Activated CD8-positive, alpha-beta T cell treated with anti-CD3 and anti-CD28 coated beads, Interleukin-2, amount 10 ng/mL, durations not matched to agents 7 days and 5 days (primary cell): ENCODE measurements at regions of chr15 and their contacts with region 1.

Region 1: DNA sequence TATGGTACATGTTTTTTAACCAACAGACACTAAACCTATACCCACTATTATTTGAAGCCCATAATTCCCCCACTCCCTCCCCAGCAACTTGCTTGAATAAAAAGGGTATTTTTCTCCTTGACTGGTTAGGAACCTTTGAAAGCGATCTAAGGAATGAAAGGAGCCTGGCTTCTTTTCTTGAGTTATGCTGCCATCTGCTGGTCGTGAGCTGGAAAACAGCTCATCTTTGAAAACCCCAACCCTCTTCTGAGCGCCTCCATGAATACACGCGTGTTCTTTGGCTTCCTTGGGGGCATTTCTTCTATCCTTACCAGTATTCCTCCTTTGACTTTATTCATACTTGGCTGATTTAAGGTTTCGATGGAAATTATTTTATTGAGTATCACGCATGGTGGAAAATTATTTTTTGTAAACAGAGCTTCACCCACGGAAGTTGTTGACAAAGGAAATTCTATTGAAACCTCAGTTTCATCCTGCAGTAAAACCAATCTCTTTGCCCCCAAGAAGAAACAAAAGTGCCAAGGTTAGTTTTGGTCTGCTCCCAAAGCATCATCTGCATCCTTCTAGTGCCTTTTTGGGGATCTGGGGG is 171.6 kb downstream of the SV2B start:
- DNase-seq: peak; percentile 74
- ATAC-seq: no peak
- H3K4me3 Mint-ChIP-seq: peak overlapping the region; percentile 49
- H3K27ac Mint-ChIP-seq: no peak overlapping the region
- H3K4me1 Mint-ChIP-seq: peaks cover 11% of the 10 kb centered on the region
- H3K27me3 Mint-ChIP-seq: peaks cover 31% of the 10 kb centered on the region

Region 2: DNA sequence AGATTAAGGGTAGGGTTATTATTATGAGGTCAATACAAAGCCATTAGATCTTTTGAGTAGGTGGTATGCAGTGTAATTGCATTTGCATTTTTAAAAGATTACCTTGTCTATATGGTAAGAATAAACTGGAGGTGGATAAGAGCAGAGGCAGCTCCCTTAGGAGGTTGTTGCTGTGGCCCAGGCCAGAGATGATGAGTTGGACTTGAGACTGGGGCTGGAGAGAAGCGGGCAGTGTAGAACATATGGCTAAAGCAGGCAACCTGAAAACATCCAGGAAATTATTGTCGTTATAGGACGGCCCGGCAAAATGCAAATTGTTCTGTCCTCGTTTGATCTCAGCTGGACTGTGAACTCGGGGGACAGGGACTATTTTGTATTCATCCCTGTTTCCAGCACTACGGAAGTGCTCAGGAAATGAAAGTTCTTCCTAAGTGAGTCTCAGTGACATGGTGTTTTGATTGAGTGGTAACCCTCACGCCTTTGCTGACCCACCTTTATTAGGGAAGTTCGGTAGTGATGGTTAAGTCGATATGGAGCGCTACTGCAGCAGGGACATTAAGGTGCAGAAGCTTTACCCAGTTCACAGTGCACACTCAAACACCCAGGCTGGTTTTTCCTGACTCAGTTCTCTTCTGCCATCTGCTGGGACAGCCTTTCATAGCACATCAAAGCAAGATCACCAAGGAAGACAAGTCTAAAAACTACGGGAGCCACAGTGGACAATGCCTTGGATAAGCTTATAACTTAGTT is 222.1 kb before region 1 on chr15:
- CTCF ChIA-PET with region 1: interaction called, 108 read pairs
- POLR2A ChIA-PET with region 1: no interaction called
- DNase-seq: peak; percentile 79
- ATAC-seq: peak; percentile 90
- H3K4me3 Mint-ChIP-seq: no peak overlapping the region
- H3K27ac Mint-ChIP-seq: no peak overlapping the region
- H3K4me1 Mint-ChIP-seq: peaks cover 27% of the 10 kb centered on the region
- H3K27me3 Mint-ChIP-seq: peaks cover 35% of the 10 kb centered on the region

Region 3: GRCh38 chr15:91055548-91056331 is 215.9 kb before region 1 on chr15:
- CTCF ChIA-PET with region 1: interaction called, 108 read pairs
- POLR2A ChIA-PET with region 1: no interaction called
- DNase-seq: peak; percentile 51
- ATAC-seq: peak; percentile 61
- H3K4me3 Mint-ChIP-seq: no peak overlapping the region
- H3K27ac Mint-ChIP-seq: no peak overlapping the region
- H3K4me1 Mint-ChIP-seq: no peaks in the 10 kb centered on the region
- H3K27me3 Mint-ChIP-seq: peaks cover 60% of the 10 kb centered on the region

Region 4: DNA sequence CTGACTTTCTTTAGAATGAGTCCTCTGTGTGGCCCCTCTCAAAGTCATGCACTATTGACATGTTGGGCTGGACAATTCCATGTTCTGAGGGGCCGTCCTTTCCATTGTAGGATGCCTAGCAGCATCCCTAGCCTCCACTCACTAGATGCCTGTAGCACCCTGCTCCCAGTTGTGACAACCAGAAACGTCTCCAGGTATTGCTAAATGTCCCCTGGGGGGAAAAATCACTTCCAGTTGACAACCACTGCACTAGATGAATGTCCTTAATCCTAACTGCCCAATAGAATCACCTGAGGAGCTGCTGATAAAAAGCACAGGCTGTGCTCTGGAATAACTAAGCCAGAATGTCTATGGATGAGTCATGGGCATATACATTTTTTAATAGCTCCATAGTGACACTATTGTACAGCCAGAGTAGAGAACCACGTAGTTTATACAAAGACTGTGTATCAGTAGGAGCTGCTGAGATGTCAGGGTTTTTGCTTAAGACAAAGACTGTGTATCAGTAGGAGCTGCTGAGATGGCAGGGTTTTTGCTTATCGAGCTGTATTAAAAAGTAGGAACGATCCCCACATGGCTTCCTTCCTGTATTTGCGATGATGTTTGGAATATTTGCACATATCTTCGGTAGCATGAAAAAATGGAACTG is 34.3 kb before region 1 on chr15:
- CTCF ChIA-PET with region 1: interaction called, 10 read pairs
- POLR2A ChIA-PET with region 1: no interaction called
- DNase-seq: no peak
- ATAC-seq: no peak
- H3K4me3 Mint-ChIP-seq: no peak overlapping the region
- H3K27ac Mint-ChIP-seq: no peak overlapping the region
- H3K4me1 Mint-ChIP-seq: no peaks in the 10 kb centered on the region
- H3K27me3 Mint-ChIP-seq: peaks cover 31% of the 10 kb centered on the region

Region 5: DNA sequence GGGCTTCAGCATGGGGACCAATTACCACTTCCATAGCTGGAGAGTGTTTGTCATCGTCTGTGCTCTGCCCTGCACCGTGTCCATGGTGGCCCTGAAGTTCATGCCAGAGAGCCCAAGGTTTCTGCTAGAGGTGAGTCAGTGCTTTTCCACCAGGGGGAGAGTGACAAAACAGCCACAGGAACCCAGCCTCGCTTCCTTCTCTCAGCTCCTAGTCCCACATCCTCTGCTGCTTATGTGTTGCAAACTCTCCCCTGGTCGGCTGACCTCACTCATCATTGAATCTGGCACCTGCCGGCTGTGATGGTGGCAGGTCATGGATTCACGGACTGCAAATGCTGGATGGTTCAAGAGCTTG is 13.3 kb before region 1 on chr15:
- CTCF ChIA-PET with region 1: interaction called, 45 read pairs
- POLR2A ChIA-PET with region 1: no interaction called
- DNase-seq: peak; percentile 42
- ATAC-seq: peak; percentile 61
- H3K4me3 Mint-ChIP-seq: no peak overlapping the region
- H3K27ac Mint-ChIP-seq: no peak overlapping the region
- H3K4me1 Mint-ChIP-seq: peaks cover 10% of the 10 kb centered on the region
- H3K27me3 Mint-ChIP-seq: peaks cover 15% of the 10 kb centered on the region

Region 6: GRCh38 chr15:91282486-91282885 is 10.8 kb after region 1 on chr15:
- CTCF ChIA-PET with region 1: interaction called, 14 read pairs
- POLR2A ChIA-PET with region 1: no interaction called
- DNase-seq: no peak
- ATAC-seq: no peak
- H3K4me3 Mint-ChIP-seq: no peak overlapping the region
- H3K27ac Mint-ChIP-seq: no peak overlapping the region
- H3K4me1 Mint-ChIP-seq: no peaks in the 10 kb centered on the region
- H3K27me3 Mint-ChIP-seq: peaks cover 20% of the 10 kb centered on the region

Region 7: DNA sequence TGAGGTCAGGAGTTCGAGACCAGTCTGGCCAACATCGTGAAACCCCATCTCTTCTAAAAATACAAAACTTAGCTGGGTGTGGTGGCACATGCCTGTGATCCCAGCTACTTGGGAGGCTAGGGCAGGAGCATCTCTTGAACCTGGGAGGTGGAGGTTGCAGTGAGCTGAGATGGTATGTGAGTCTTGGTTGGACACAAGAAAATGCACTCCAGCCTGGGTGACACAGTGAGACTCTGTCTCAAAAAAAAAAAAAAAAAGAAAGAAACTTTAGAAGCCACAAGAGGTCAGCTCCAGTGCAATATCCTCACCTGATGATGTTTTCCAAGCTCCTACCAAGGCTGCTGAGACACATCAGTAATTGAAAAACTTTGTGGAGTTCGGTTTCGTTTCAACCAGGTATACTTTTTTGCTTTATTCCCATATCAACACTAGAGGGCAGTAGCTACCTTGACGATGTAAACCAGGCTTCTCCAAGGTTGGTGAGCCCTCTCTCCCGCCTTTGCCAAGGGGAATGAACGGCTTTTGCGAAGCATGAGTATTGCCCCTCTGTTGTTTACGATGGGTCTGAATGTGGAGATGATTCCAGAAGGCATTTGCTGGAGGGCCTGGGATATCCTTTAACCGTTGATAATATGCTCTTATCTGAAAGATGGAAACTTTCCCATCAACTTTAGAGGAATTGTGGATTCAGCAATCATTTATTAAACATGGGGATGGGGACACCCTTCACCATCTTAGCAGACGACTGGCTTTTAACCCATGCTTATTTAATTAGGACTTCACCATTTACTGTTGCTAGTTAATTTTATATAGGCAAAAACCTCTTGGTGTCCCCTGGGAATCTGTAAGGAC is 31.2 kb after region 1 on chr15:
- CTCF ChIA-PET with region 1: interaction called, 11 read pairs
- POLR2A ChIA-PET with region 1: no interaction called
- DNase-seq: peak; percentile 45
- ATAC-seq: peak; percentile 74
- H3K4me3 Mint-ChIP-seq: no peak overlapping the region
- H3K27ac Mint-ChIP-seq: peak overlapping the region; percentile 64
- H3K4me1 Mint-ChIP-seq: peaks cover 53% of the 10 kb centered on the region
- H3K27me3 Mint-ChIP-seq: peaks cover 41% of the 10 kb centered on the region

Region 8: DNA sequence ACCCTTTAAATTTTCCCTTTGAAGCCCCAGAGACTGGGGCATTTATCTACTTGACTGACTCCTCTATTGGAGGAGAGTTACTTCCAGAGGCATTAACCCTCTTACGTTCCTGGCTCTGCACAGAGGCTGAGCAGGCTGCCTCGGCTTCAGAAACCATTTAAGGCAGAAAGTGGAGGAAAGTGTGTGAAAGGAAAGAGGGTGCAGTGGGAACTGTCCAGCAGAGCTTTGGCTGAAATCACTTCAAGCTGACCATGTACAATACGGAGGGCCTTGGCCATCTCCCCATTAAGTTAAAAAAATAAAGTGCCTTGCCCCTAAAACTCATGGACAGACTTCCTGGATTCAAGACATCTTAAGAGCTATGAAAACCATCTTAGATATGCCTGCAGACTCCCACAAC is 67.1 kb after region 1 on chr15:
- CTCF ChIA-PET with region 1: no interaction called
- POLR2A ChIA-PET with region 1: no interaction called
- DNase-seq: peak; percentile 49
- ATAC-seq: peak; percentile 44
- H3K4me3 Mint-ChIP-seq: no peak overlapping the region
- H3K27ac Mint-ChIP-seq: no peak overlapping the region
- H3K4me1 Mint-ChIP-seq: peaks cover 13% of the 10 kb centered on the region
- H3K27me3 Mint-ChIP-seq: peaks cover 22% of the 10 kb centered on the region